ENCODE measurements at regions of chr9 and their contacts with region 1.

Region 1: GRCh38 chr9:129080602-129081387 is at the start of gene DOLPP1:
- DNase-seq: peak; percentile 96 to 99 (median 98)
- H3K4me3 ChIP-seq: peak within 1 kb of the TSS; percentile 63 to 100 (median 86)
- H3K27ac ChIP-seq: peak within 1 kb of the TSS; percentile 17 to 97 (median 87)
- H3K27me3 ChIP-seq: no peaks in the 10 kb centered on the region
- CTCF ChIP-seq: peak in 21 of 56 donors; percentile 5 to 50 (median 21)
- total RNA-seq, gene DOLPP1: 9.9 to 26.6 (median 16.5) TPM

Region 2: GRCh38 chr9:128947422-128948301 is 133.1 kb before region 1 on chr9 and contains the starts of genes DOLK and NUP188:
- intact Hi-C with region 1: loop called in 1 of 2 experiments (anchors 5 kb)
- DNase-seq: peak; percentile 91 to 99 (median 96)
- H3K4me3 ChIP-seq: peak within 1 kb of the TSS; percentile 63 to 100 (median 92)
- H3K27ac ChIP-seq: peak within 1 kb of the TSS; percentile 52 to 97 (median 92)
- H3K27me3 ChIP-seq: no peaks in the 10 kb centered on the region
- CTCF ChIP-seq: peak in 14 of 56 donors; percentile 11 to 54 (median 25)
- total RNA-seq, gene DOLK: 3.6 to 13.2 (median 8.4) TPM
- total RNA-seq, gene NUP188: 23.7 to 70.4 (median 41.1) TPM

Region 3: DNA sequence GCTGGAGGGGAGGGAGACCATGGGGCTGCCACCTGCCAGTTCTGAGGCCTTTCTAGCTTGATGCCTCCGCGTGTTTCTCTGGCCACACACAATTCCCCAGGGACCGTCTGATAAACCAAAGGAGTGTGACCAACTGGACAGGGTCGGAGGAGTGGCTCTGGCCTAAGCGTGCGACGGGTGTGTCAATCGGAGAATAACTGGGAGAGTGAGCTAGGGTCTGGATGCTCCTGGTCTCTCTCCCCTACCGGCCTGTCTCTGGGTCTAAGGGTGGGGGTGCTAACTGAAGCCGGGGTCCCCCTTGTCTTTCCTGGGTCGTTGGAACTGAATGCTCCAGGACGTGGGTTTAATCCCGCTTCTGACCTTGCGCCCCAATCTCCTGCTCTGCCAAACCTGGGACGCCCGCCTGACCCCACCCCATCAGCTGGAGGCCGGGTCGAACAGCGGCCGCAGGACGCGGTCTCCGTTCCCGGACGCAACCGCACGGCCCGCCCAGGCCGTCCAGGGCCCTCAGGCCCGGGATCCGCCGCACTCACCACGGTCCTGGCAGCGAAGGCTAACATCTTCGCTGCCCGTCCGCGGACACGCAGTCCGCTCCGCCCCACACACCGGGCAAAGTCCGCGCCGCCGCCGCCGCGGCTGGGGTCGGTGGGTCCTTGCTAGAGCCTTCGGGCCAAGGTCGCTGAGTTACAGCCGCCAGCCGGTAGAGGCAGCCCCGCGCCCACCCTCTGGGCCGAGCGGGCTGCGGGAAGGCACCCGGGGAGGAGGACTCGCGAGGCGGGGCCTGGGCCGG is 29.4 kb after region 1 on chr9:
- intact Hi-C with region 1: loop called in 1 of 2 experiments (anchors 2 kb)
- DNase-seq: peak in 1 of 10 donors; percentile 13
- H3K4me3 ChIP-seq: peak overlapping the region; percentile 70 to 100 (median 90)
- H3K27ac ChIP-seq: peak overlapping the region in 58 of 59 donors; percentile 15 to 99 (median 94)
- H3K27me3 ChIP-seq: no peaks in the 10 kb centered on the region
- CTCF ChIP-seq: peak in 2 of 56 donors; percentile 6 to 9

Region 4: DNA sequence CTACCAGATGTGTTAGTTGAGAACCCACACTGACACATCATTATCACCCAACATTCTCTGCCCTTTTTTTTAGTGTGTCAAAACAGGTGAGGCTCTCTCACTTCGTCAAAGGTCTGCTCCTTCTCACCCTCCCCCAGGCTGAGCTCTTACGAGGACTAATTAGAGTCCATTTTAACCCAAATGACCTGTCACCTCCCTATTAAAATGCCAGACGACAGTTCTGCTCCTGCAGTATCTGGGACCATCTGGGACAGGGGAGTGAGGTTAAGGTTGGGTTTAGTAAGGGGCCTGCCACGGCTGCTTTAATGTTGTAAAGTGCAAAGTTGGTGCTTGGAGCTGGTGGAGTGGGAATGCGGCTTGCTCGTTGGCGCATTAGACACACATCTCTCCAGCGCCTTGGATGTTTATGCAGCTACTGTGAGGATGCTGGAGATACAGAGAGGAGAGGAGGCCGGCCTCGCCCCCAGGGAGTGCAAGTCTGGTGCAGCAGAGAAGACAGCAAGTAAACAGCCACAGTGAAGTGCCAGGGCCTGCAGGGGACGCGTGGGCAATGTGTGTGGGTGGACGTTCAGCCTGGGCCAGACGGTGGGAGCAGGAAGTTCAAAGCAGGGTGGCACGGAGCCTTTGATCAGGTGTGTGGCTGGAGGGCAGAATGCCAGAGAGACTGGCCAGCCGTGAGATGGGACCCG is 443.9 kb after region 1 on chr9:
- intact Hi-C with region 1: no loop called
- DNase-seq: peak in 2 of 10 donors; percentile 19 to 33
- H3K4me3 ChIP-seq: no peak overlapping the region
- H3K27ac ChIP-seq: no peak overlapping the region
- H3K27me3 ChIP-seq: no peaks in the 10 kb centered on the region
- CTCF ChIP-seq: no peak